A673 (cell line): ENCODE measurements at regions of chr11 and their contacts with region 1.

Region 1: DNA sequence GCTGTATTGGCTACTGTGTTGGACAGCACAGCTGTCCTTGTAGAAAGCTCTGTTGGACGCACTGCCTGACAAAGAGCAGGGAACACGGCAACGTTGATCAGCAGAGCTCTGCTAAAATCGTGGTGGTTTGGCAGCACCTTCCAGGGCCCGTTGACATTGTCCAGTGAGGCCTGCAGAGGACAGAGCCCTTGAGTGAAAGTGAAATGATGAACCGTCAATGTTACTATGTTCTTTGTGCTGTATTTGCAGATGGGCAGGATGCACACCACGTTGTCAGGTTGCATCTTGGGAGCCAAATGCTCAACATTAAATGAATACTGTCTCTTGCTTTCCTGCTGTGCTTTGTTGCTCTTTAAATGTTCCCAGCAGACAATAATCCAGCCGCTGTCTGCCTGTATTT is 69.7 kb downstream of the NELL1 start:
- DNase-seq: no peak
- H3K4me3 ChIP-seq: no peak overlapping the region
- H3K27ac ChIP-seq: no peak overlapping the region
- H3K4me1 ChIP-seq: no peaks in the 10 kb centered on the region
- H3K27me3 ChIP-seq: no peaks in the 10 kb centered on the region
- CTCF ChIP-seq: no peak

Region 2: GRCh38 chr11:21018248-21018647 is 279.1 kb after region 1 on chr11:
- CTCF ChIA-PET with region 1: no interaction called
- POLR2A ChIA-PET with region 1: interaction called, 12 read pairs
- intact Hi-C with region 1: no loop called
- DNase-seq: no peak
- H3K4me3 ChIP-seq: no peak overlapping the region
- H3K27ac ChIP-seq: no peak overlapping the region
- H3K4me1 ChIP-seq: no peaks in the 10 kb centered on the region
- H3K27me3 ChIP-seq: no peaks in the 10 kb centered on the region
- CTCF ChIP-seq: no peak